Activated B cell treated with CpG ODN at 0.5 μM for 24 hours (primary cell): ENCODE measurements at regions of chr3 and their contacts with region 1.

Region 1: GRCh38 chr3:104977719-104978118 is 389.0 kb upstream of the ALCAM start:
- DNase-seq: no peak
- ATAC-seq: no peak
- H3K4me3 Mint-ChIP-seq: no peak overlapping the region
- H3K27ac Mint-ChIP-seq: no peak overlapping the region
- H3K4me1 Mint-ChIP-seq: no peaks in the 10 kb centered on the region
- H3K27me3 Mint-ChIP-seq: peaks cover 2% of the 10 kb centered on the region
- CTCF ChIP-seq: no peak

Region 2: DNA sequence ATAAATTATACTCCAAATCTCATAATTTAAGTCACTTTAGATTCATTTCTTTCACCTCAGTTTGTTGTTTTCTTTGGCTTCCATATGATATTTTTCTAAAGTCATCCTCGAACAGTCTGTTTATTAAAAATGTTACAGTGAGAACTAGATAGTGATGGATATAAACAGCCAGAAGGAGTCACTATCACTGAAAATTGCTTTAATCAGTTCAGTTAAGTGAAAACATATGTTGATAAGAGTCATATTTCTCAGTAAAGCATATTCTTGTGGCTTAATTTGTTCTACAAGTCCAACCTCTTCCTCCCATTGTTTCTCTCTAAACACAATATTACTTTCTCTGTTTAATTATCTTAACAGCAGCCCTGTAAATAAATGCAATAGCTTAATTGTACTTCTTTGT is 38.5 kb before region 1 on chr3:
- CTCF ChIA-PET with region 1: no interaction called
- POLR2A ChIA-PET with region 1: no interaction called
- intact Hi-C with region 1: no loop called
- DNase-seq: no peak
- ATAC-seq: no peak
- H3K4me3 Mint-ChIP-seq: no peak overlapping the region
- H3K27ac Mint-ChIP-seq: no peak overlapping the region
- H3K4me1 Mint-ChIP-seq: no peaks in the 10 kb centered on the region
- H3K27me3 Mint-ChIP-seq: no peaks in the 10 kb centered on the region
- CTCF ChIP-seq: no peak

Region 3: GRCh38 chr3:105014631-105015030 is 36.9 kb after region 1 on chr3:
- CTCF ChIA-PET with region 1: no interaction called
- POLR2A ChIA-PET with region 1: no interaction called
- intact Hi-C with region 1: loop called (anchors 2 kb)
- DNase-seq: no peak
- ATAC-seq: no peak
- H3K4me3 Mint-ChIP-seq: no peak overlapping the region
- H3K27ac Mint-ChIP-seq: no peak overlapping the region
- H3K4me1 Mint-ChIP-seq: no peaks in the 10 kb centered on the region
- H3K27me3 Mint-ChIP-seq: no peaks in the 10 kb centered on the region
- CTCF ChIP-seq: no peak